Natural killer cell (primary cell): ENCODE measurements at regions of chr20 and their contacts with region 1.

Region 1: GRCh38 chr20:38805502-38805957 is at the start of gene PPP1R16B:
- DNase-seq: peak; percentile 77 to 88
- ATAC-seq: peak; percentile 73 to 85 (median 74)
- H3K4me3 ChIP-seq: peak within 1 kb of the TSS; percentile 96
- H3K4me3 Mint-ChIP-seq: peak within 1 kb of the TSS; percentile 95
- H3K27ac ChIP-seq: peak within 1 kb of the TSS; percentile 99
- H3K27ac Mint-ChIP-seq: peak within 1 kb of the TSS; percentile 86 to 97
- H3K4me1 ChIP-seq: peaks cover 54% of the 10 kb centered on the region
- H3K4me1 Mint-ChIP-seq: peaks cover 56% of the 10 kb centered on the region in 2 donors
- H3K27me3 ChIP-seq: no peaks in the 10 kb centered on the region
- H3K27me3 Mint-ChIP-seq: no peaks in the 10 kb centered on the region
- CTCF ChIP-seq: no peak
- total RNA-seq, gene PPP1R16B: 52.0 to 62.3 (median 53.7) TPM

Region 2: GRCh38 chr20:38776363-38776762 is 29.2 kb before region 1 on chr20:
- intact Hi-C with region 1: loop called (anchors 2 kb)
- DNase-seq: peak; percentile 21 to 54
- ATAC-seq: peak; percentile 71 to 91 (median 83)
- H3K4me3 ChIP-seq: peak overlapping the region; percentile 2
- H3K4me3 Mint-ChIP-seq: peak overlapping the region; percentile 79
- H3K27ac ChIP-seq: peak overlapping the region; percentile 64
- H3K27ac Mint-ChIP-seq: peak overlapping the region; percentile 86 to 90
- H3K4me1 ChIP-seq: peaks cover 14% of the 10 kb centered on the region
- H3K4me1 Mint-ChIP-seq: peaks cover 16 to 23% of the 10 kb centered on the region in 2 donors
- H3K27me3 ChIP-seq: no peaks in the 10 kb centered on the region
- H3K27me3 Mint-ChIP-seq: no peaks in the 10 kb centered on the region
- CTCF ChIP-seq: no peak

Region 3: DNA sequence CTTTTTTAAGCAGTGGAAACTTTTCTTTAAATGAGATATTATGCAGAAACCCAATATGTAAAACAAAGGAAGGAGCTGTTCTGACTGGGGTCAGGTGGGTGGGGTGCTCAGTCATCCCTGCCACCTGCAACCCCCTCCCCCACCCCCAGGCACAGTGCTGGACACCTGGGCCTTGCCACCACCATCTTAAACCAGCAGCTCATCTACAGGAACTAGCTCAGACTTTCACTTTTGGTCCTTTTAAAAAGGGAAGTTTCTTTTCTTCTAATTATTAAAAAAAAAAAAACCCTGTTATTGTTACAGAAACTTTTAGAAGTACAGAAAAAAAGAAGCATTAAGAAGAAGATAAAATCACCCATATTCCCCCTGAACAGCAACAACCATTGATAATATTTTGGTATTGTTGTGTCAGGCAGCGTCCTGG is 37.0 kb after region 1 on chr20:
- intact Hi-C with region 1: loop called (anchors 1 kb)
- DNase-seq: peak in 1 of 2 donors; percentile 69
- ATAC-seq: peak; percentile 17 to 43 (median 37)
- H3K4me3 ChIP-seq: no peak overlapping the region
- H3K4me3 Mint-ChIP-seq: peak overlapping the region; percentile 70
- H3K27ac ChIP-seq: peak overlapping the region; percentile 73
- H3K27ac Mint-ChIP-seq: peak overlapping the region; percentile 89 to 92
- H3K4me1 ChIP-seq: peaks cover 40% of the 10 kb centered on the region
- H3K4me1 Mint-ChIP-seq: peaks cover 64 to 67% of the 10 kb centered on the region in 2 donors
- H3K27me3 ChIP-seq: no peaks in the 10 kb centered on the region
- H3K27me3 Mint-ChIP-seq: no peaks in the 10 kb centered on the region
- CTCF ChIP-seq: no peak

Region 4: DNA sequence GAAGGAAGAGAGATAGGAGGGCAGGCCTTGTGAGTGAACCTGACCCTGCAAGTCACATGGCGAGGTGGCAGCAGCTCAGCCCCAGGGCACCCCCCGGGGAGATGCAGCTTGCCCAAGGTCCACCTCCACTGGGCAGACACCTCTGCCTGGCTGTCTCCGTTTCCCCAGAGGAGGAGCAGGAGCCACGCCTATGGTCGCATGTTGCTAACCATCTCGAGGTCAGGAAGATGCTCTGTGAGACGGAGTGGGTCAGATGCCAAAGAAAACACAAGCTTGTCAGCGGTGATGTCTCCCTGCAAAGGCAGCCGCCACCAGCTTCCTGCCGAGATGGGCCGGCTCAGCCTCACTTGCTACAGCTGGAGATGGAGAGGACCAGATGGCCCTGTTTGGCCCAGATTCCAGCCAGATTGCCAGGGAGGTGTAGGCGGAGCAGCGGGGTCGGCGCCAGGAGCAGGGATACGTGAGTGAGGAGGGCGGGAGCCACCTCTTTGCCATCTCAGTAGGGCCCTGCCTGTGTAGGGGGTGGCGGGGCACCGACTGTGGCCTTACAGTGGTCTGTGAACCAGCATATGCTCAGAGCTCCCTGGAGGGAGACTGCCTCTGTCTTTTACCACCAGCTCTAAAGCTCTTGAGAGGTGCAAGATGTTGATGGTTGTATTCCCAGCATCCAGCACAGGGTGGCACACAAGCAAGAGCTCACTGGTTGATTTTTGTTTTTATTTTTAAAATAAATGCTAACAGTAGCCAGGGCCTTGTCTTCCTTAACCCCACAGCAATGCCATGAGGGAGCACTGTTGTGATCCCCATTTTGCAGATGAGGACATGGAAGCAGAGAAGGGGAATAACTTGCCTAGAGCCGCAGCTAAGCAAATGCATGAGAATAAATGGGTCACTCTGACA is 77.8 kb after region 1 on chr20:
- intact Hi-C with region 1: no loop called
- DNase-seq: peak in 1 of 2 donors; percentile 41
- ATAC-seq: peak; percentile 57 to 72 (median 62)
- H3K4me3 ChIP-seq: no peak overlapping the region
- H3K4me3 Mint-ChIP-seq: peak overlapping the region; percentile 65
- H3K27ac ChIP-seq: peak overlapping the region; percentile 65
- H3K27ac Mint-ChIP-seq: peak overlapping the region; percentile 87 to 94
- H3K4me1 ChIP-seq: peaks cover 66% of the 10 kb centered on the region
- H3K4me1 Mint-ChIP-seq: peaks cover 62 to 69% of the 10 kb centered on the region in 2 donors
- H3K27me3 ChIP-seq: no peaks in the 10 kb centered on the region
- H3K27me3 Mint-ChIP-seq: no peaks in the 10 kb centered on the region
- CTCF ChIP-seq: no peak

Region 5: GRCh38 chr20:38947931-38948362 is 142.4 kb after region 1 on chr20:
- intact Hi-C with region 1: no loop called
- DNase-seq: no peak
- ATAC-seq: no peak
- H3K4me3 ChIP-seq: no peak overlapping the region
- H3K4me3 Mint-ChIP-seq: no peak overlapping the region
- H3K27ac ChIP-seq: no peak overlapping the region
- H3K27ac Mint-ChIP-seq: no peak overlapping the region
- H3K4me1 ChIP-seq: no peaks in the 10 kb centered on the region
- H3K4me1 Mint-ChIP-seq: no peaks in the 10 kb centered on the region
- H3K27me3 ChIP-seq: no peaks in the 10 kb centered on the region
- H3K27me3 Mint-ChIP-seq: no peaks in the 10 kb centered on the region
- CTCF ChIP-seq: no peak